CD8-positive, alpha-beta memory T cell (primary cell): ENCODE measurements at regions of chr1 and their contacts with region 1.

Region 1: DNA sequence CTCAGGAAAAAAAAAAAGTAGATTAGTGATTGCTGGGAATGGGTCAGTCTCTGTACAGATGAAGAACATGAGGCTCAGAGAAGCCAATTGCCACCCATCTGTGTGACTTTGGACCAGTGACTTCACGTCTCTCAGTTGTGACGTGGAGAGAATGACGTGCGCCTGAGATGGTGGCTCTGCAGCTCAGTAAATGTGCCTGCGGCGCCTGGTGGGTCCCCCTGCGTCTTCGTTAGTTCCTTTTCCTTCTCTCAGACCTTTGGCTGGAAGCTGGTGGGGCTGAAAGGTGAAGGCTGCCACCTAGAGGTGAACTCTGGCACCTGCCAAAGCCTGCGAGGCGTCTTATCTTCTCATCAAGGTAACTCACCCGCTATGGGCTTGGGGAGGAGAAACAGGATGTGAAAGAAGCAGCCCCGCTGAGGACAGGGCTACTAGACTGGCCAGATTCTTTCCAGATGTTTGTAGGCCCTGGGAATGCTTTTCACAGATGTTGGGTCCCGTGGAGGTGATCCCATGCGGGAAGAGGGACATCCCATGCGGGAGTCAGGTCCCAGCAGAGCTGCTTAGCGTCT is 8.7 kb upstream of the E2F2 start:
- DNase-seq: peak; percentile 82 to 94 (median 88)
- H3K4me3 ChIP-seq: no peak overlapping the region
- H3K4me3 Mint-ChIP-seq: peak overlapping the region in 5 of 7 donors; percentile 29 to 65 (median 62)
- H3K27ac ChIP-seq: peak overlapping the region; percentile 22
- H3K27ac Mint-ChIP-seq: peak overlapping the region in 7 of 8 donors; percentile 12 to 85 (median 74)
- H3K4me1 ChIP-seq: peaks cover 13% of the 10 kb centered on the region
- H3K4me1 Mint-ChIP-seq: peaks cover 12 to 17% (median 16%) of the 10 kb centered on the region in 3 donors
- H3K27me3 ChIP-seq: no peaks in the 10 kb centered on the region
- H3K27me3 Mint-ChIP-seq: peaks cover 0 to 6% of the 10 kb centered on the region in 2 donors

Region 2: DNA sequence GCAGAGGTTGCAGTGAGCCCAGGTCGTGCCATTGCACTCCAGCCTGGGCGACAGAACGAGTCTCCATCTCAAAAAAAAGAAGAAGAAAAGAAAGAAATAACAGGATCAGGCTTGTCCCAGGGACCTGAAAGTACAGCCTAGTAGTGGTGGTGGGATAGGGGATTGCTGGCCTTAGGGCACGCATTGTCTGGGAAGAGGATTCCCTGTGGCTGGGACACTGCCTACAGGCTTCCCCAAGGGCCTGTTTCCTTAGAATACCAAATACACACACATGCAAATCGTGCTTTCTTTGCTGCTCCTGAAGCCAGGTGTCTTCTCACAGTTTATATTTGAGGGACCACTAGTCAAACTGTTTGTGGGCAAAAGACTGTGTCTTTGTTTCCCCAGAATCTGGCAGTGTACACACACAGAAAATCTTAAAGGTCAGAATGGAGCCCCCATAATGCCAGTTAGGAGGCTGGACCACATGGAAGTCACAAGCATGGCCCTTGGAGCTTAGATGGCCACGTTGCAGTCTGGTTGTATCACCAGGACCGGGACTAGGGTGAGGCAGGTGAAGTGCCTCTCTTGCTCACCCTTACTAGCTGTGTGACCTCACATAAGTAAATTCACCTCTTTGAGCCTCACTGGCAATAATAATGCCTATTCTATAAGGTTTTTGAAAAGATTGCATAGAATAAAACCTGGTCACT is 43.1 kb before region 1 on chr1:
- CTCF ChIA-PET with region 1: interaction called, 588 read pairs
- POLR2A ChIA-PET with region 1: interaction called, 16 read pairs
- DNase-seq: no peak
- H3K4me3 ChIP-seq: no peak overlapping the region
- H3K4me3 Mint-ChIP-seq: no peak overlapping the region
- H3K27ac ChIP-seq: no peak overlapping the region
- H3K27ac Mint-ChIP-seq: no peak overlapping the region
- H3K4me1 ChIP-seq: no peaks in the 10 kb centered on the region
- H3K4me1 Mint-ChIP-seq: peaks cover 3 to 5% (median 5%) of the 10 kb centered on the region in 3 donors
- H3K27me3 ChIP-seq: no peaks in the 10 kb centered on the region
- H3K27me3 Mint-ChIP-seq: peaks cover 0 to 6% of the 10 kb centered on the region in 2 donors

Region 3: GRCh38 chr1:23514111-23514679 is 25.6 kb before region 1 on chr1:
- CTCF ChIA-PET with region 1: interaction called, 10 read pairs
- POLR2A ChIA-PET with region 1: no interaction called
- DNase-seq: no peak
- H3K4me3 ChIP-seq: no peak overlapping the region
- H3K4me3 Mint-ChIP-seq: no peak overlapping the region
- H3K27ac ChIP-seq: no peak overlapping the region
- H3K27ac Mint-ChIP-seq: no peak overlapping the region
- H3K4me1 ChIP-seq: no peaks in the 10 kb centered on the region
- H3K4me1 Mint-ChIP-seq: peaks cover 0 to 6% (median 2%) of the 10 kb centered on the region in 3 donors
- H3K27me3 ChIP-seq: no peaks in the 10 kb centered on the region
- H3K27me3 Mint-ChIP-seq: no peaks in the 10 kb centered on the region

Region 4: DNA sequence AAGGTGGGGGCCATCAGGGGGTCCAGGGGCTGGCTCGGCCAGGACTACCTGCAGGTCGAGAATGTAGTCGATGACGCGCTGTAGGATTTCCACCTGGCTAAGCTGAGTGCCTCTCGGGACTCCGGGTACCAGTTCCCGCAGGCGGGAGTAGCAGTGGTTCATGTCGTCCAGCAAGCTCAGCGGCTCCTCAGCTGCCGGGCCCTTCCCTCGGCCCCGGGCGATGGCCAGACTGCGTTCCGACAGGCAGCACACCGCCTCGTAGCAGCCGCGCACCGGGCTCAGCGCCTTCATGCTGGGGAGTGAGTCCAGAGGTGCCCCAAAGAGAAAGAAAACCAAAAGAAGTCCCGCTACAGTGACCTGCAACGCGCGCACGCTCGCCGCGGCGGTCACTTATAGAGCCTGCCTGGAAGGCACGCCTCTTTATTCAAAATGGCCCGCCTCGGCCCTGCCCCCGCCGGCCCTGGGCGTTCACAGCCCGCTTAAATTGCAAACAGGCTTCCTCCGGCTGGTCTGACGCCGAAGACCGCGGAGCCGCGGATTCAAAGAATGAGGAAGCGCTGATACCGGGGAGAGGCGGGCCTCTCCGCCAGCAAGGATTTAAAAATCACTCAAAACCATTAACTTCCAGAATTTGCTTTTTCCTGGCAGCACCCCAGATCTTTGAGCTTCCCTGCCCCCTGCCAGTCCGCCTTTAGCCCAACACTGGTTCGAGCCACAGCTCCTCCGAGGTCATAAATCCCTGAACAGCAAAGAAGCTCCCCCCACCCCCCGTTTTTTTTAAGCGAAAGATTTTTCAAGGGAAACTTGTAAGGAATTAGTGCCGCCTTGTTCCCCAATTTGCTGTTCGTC is 19.6 kb after region 1 on chr1 and contains the start of gene ID3:
- CTCF ChIA-PET with region 1: interaction called, 26 read pairs
- POLR2A ChIA-PET with region 1: interaction called, 4 read pairs
- DNase-seq: peak; percentile 80 to 89 (median 89)
- H3K4me3 ChIP-seq: peak within 1 kb of the TSS; percentile 92
- H3K4me3 Mint-ChIP-seq: peak within 1 kb of the TSS; percentile 91 to 96 (median 93)
- H3K27ac ChIP-seq: peak within 1 kb of the TSS; percentile 80
- H3K27ac Mint-ChIP-seq: peak within 1 kb of the TSS; percentile 81 to 95 (median 91)
- H3K4me1 ChIP-seq: peaks cover 50% of the 10 kb centered on the region
- H3K4me1 Mint-ChIP-seq: peaks cover 43 to 63% (median 57%) of the 10 kb centered on the region in 3 donors
- H3K27me3 ChIP-seq: no peaks in the 10 kb centered on the region
- H3K27me3 Mint-ChIP-seq: peaks cover 0 to 8% of the 10 kb centered on the region in 2 donors
- total RNA-seq, gene ID3: 18.4 to 19.3 TPM

Region 5: GRCh38 chr1:23643736-23644554 is 104.2 kb after region 1 on chr1:
- CTCF ChIA-PET with region 1: interaction called, 341 read pairs
- POLR2A ChIA-PET with region 1: no interaction called
- DNase-seq: no peak
- H3K4me3 ChIP-seq: no peak overlapping the region
- H3K4me3 Mint-ChIP-seq: no peak overlapping the region
- H3K27ac ChIP-seq: no peak overlapping the region
- H3K27ac Mint-ChIP-seq: peak overlapping the region in 1 of 8 donors; percentile 29
- H3K4me1 ChIP-seq: no peaks in the 10 kb centered on the region
- H3K4me1 Mint-ChIP-seq: no peaks in the 10 kb centered on the region
- H3K27me3 ChIP-seq: no peaks in the 10 kb centered on the region
- H3K27me3 Mint-ChIP-seq: peaks cover 0 to 1% of the 10 kb centered on the region in 2 donors